K562 (cell line): ENCODE measurements at regions of chr2 and their contacts with region 1.

Region 1: GRCh38 chr2:99949963-99950362 is 192.4 kb downstream of the AFF3 start:
- DNase-seq: no peak
- ATAC-seq: no peak
- H3K4me3 ChIP-seq: no peak overlapping the region
- H3K27ac ChIP-seq: no peak overlapping the region
- H3K4me1 ChIP-seq: no peaks in the 10 kb centered on the region
- H3K27me3 ChIP-seq: no peaks in the 10 kb centered on the region; a peak in 2 of 5 replicates
- CTCF ChIP-seq: no peak
- EP300 ChIP-seq: no peak
- POLR2A ChIP-seq: no peak
- RAD21 ChIP-seq: no peak

Region 2: DNA sequence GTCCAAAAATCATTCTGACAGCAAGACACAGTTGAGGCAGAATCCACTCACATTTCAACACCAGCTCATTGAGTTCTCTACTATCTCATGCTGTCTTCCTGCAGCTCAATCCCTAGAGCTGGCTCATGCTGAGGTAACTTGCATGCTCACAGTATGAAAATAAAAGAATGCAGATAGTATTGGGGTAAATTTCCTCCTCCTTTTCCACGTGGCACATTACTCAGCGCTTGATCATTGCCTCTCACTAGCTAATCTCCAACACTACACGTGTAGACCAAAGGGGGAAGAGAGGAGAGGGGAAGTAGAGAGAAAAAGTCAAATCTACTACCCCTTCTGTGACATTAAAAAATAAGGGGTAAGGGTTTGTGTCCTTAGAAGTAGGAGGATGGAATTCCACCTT is 108.2 kb before region 1 on chr2:
- CTCF ChIA-PET with region 1: no interaction called
- POLR2A ChIA-PET with region 1: no interaction called
- in situ Hi-C with region 1: no loop called
- intact Hi-C with region 1: loop called (anchors 5 kb)
- DNase-seq: no peak
- ATAC-seq: no peak
- H3K4me3 ChIP-seq: no peak overlapping the region
- H3K27ac ChIP-seq: no peak overlapping the region
- H3K4me1 ChIP-seq: no peaks in the 10 kb centered on the region
- H3K27me3 ChIP-seq: peaks cover 14 to 17% of the 10 kb centered on the region in 2 experiments; a peak in 3 of 5 replicates
- CTCF ChIP-seq: no peak
- EP300 ChIP-seq: no peak
- POLR2A ChIP-seq: no peak
- RAD21 ChIP-seq: no peak